Activated T-helper 1 cell treated with anti-CD3 and anti-CD28 coated beads, Interleukin-12 subunit alpha, Interleukin-12 subunit beta, Interleukin-2, Interleukin-4 antibody, amounts not matched to agents 30 ng/mL and 10 ng/mL and 1 ng/mL, durations not matched to agents 14 hours and 24 hours and 36 hours (primary cell): ENCODE measurements at regions of chr1 and their contacts with region 1.

Region 1: GRCh38 chr1:151909150-151910149 is at the start of gene THEM4:
- DNase-seq: peak; percentile 87
- H3K4me3 Mint-ChIP-seq: peak within 1 kb of the TSS; percentile 80
- H3K27ac Mint-ChIP-seq: peak within 1 kb of the TSS; percentile 85
- H3K4me1 Mint-ChIP-seq: peaks cover 37% of the 10 kb centered on the region
- H3K27me3 Mint-ChIP-seq: peaks cover 5% of the 10 kb centered on the region
- total RNA-seq, gene THEM4: 24.7 and 27.5 TPM in 2 replicates

Region 2: GRCh38 chr1:151762941-151763921 is 146.2 kb before region 1 on chr1 and contains the start of gene MRPL9:
- intact Hi-C with region 1: no loop called
- DNase-seq: peak; percentile 84
- H3K4me3 Mint-ChIP-seq: peak within 1 kb of the TSS; percentile 89
- H3K27ac Mint-ChIP-seq: peak within 1 kb of the TSS; percentile 96
- H3K4me1 Mint-ChIP-seq: peaks cover 35% of the 10 kb centered on the region
- H3K27me3 Mint-ChIP-seq: no peaks in the 10 kb centered on the region
- total RNA-seq, gene MRPL9: 136 and 141 TPM in 2 replicates

Region 3: DNA sequence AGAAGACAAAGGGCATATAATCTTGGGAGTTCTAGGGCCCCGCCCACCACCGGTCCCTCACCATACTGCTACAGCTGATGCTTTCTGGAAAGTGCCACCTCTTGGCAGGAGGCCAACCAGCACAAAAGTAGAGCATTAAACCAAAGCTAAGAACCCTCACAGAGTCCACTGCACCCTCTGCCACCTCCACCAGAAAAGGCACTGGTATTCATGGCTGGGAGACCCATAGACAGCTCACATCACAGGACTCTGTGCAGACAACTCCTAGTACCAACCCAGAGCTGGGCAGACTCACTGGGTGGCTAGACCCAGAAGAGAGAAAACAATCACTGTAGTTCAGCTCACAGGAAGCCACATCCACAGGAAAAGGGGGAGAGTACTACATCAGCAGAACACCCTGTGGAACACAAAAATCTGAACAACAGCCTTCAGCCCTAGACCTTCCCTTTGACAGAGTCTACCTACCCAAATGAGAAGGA is 10.9 kb before region 1 on chr1:
- intact Hi-C with region 1: loop called (anchors 1 kb)
- DNase-seq: peak; percentile 56
- H3K4me3 Mint-ChIP-seq: peak overlapping the region; percentile 60
- H3K27ac Mint-ChIP-seq: peak overlapping the region; percentile 63
- H3K4me1 Mint-ChIP-seq: peaks cover 47% of the 10 kb centered on the region
- H3K27me3 Mint-ChIP-seq: no peaks in the 10 kb centered on the region

Region 4: GRCh38 chr1:151924679-151925587 is 15.5 kb after region 1 on chr1:
- intact Hi-C with region 1: loop called (anchors 2 kb)
- DNase-seq: no peak
- H3K4me3 Mint-ChIP-seq: peak overlapping the region; percentile 3
- H3K27ac Mint-ChIP-seq: peak overlapping the region; percentile 73
- H3K4me1 Mint-ChIP-seq: peaks cover 28% of the 10 kb centered on the region
- H3K27me3 Mint-ChIP-seq: no peaks in the 10 kb centered on the region